ENCODE measurements at regions of chr11 and their contacts with region 1.

Region 1: GRCh38 chr11:61816736-61817455 is at the start of gene FADS1:
- DNase-seq: peak; percentile 78 to 98
- H3K4me3 ChIP-seq: peak within 1 kb of the TSS; percentile 85 to 86
- H3K27ac ChIP-seq: peak within 1 kb of the TSS; percentile 99
- H3K4me1 ChIP-seq: peaks cover 0 to 9% of the 10 kb centered on the region in 2 donors
- H3K27me3 ChIP-seq: no peaks in the 10 kb centered on the region
- CTCF ChIP-seq: peak; percentile 55 to 74 (median 58)
- total RNA-seq, gene FADS1: 47.1 TPM

Region 2: DNA sequence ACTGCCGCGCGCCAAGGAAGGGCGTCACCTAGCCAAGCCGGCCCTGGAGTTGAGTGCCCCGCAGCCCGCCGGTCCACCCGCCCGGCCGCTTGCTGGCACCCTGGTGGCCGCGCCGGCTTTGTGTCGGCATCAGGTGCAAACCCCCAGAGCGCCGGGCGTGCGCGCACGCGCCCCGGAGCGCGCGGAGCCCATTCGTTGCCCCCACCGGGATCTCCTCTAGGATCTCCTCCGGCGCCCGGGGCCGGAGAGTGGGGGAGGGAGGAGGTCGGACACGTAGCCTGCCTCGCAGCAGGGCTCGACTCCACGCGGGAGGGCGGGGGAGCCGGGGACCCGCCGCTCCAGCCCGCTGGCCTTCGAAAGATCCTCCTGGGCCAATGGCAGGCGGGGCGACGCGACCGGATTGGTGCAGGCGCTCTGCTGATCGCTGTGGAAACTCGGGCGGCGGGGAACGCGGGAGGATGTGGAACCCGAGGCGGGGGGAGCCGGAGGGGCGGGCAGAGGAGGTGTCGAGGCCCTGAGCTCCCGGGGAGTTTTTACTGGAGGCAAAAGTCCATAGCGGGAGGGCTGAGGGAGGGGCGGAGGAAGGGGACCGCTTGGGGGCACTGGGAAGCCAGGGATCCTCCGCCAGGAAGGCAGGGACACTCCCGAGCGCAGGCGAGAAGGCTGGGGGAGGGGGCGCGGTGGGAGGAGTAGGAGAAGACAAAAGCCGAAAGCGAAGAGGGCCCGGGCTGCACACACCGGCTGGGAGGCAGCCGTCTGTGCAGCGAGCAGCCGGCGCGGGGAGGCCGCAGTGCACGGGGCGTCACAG is 10.9 kb after region 1 on chr11 and contains the start of gene FADS2:
- intact Hi-C with region 1: loop called (anchors 1 kb)
- DNase-seq: peak; percentile 75 to 96
- H3K4me3 ChIP-seq: peak within 1 kb of the TSS; percentile 74 to 78
- H3K27ac ChIP-seq: peak within 1 kb of the TSS; percentile 90 to 92
- H3K4me1 ChIP-seq: peaks cover 2 to 39% of the 10 kb centered on the region in 2 donors
- H3K27me3 ChIP-seq: no peaks in the 10 kb centered on the region
- CTCF ChIP-seq: peak in 1 of 3 experiments; percentile 17
- total RNA-seq, gene FADS2: 37.6 TPM

Region 3: GRCh38 chr11:62013591-62014476 is 196.9 kb after region 1 on chr11:
- intact Hi-C with region 1: no loop called
- DNase-seq: no peak
- H3K4me3 ChIP-seq: no peak overlapping the region
- H3K27ac ChIP-seq: no peak overlapping the region
- H3K4me1 ChIP-seq: no peaks in the 10 kb centered on the region
- H3K27me3 ChIP-seq: no peaks in the 10 kb centered on the region
- CTCF ChIP-seq: no peak